Esophagus muscularis mucosa (tissue), 4 donors: ENCODE measurements at regions of chr6 and their contacts with region 1.

Region 1: GRCh38 chr6:125314019-125314581 is 12.3 kb upstream of the HDDC2 start:
- DNase-seq: peak; percentile 93
- H3K4me3 ChIP-seq: no peak overlapping the region
- H3K27ac ChIP-seq: no peak overlapping the region
- H3K4me1 ChIP-seq: peaks cover 0 to 6% (median 1%) of the 10 kb centered on the region in 4 donors
- H3K27me3 ChIP-seq: peaks cover 0 to 4% (median 0%) of the 10 kb centered on the region in 4 donors
- CTCF ChIP-seq: peak; percentile 79 to 90 (median 83)
- EP300 ChIP-seq: no peak
- POLR2A ChIP-seq: no peak

Region 2: DNA sequence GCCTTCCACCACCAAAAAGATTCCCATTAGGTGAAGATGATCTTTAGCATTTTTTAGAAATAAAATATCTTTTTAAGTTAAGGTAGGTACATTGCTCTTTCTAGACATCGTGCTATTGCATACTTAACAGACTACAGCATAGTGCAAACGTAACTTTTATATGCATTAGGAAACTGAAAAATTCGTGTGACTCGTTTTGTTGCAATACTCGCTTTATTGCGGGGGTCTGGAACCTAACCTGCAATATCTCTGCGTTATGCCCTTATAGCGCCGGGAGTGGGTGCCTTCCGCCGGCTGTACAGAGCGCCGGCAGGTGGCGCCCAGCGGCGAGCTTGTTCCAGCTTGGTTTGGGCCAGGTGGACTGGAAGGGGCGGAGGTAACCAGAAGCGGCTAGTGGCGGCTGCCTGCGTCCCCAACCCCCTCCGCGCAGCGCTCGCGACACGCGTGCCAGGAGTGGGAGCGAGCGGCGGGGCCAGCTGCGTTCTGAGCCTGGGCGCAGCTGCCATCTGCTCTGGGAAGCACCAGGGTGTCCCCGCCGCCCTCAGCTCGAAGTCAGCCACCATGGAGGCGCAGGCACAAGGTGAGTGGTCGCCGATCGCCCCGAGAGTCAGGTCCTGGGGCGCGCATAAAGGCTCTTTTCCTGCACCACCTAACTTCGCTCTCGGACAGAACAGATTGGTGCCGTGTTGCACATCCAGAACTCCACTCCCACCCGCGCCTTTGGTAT is 160.5 kb before region 1 on chr6 and contains the start of gene TPD52L1:
- intact Hi-C with region 1: loop called (anchors 5 kb)
- DNase-seq: no peak
- H3K4me3 ChIP-seq: peak within 1 kb of the TSS; percentile 60 to 80 (median 66)
- H3K27ac ChIP-seq: peak within 1 kb of the TSS; percentile 63 to 78 (median 71)
- H3K4me1 ChIP-seq: peaks cover 6 to 29% (median 25%) of the 10 kb centered on the region in 4 donors
- H3K27me3 ChIP-seq: no peaks in the 10 kb centered on the region
- CTCF ChIP-seq: peak; percentile 72 to 90 (median 89)
- EP300 ChIP-seq: no peak
- POLR2A ChIP-seq: no peak
- total RNA-seq, gene TPD52L1: 18.7 to 46.4 (median 31.1) TPM

Region 3: DNA sequence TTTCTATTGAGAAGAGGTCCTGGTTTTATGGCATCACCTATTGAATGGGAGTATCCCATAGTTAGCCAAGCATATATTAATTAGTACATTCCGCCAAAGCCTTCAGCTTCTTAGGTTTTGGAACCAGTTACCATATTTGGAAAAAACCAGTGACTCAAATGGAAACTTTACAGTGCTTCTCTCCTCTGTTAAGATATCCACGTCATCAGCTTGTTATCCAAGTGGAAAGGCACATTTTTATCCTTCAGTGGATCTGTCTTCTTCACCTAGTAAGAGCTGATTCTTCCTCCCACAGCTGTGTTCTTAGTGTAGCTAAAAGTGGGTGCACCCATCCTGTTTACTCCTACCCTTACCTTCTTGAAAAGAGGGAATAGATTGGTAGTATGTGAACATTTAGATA is 126.1 kb before region 1 on chr6:
- intact Hi-C with region 1: no loop called
- DNase-seq: no peak
- H3K4me3 ChIP-seq: no peak overlapping the region
- H3K27ac ChIP-seq: no peak overlapping the region
- H3K4me1 ChIP-seq: peaks cover 0 to 28% (median 7%) of the 10 kb centered on the region in 4 donors
- H3K27me3 ChIP-seq: no peaks in the 10 kb centered on the region
- CTCF ChIP-seq: no peak
- EP300 ChIP-seq: no peak
- POLR2A ChIP-seq: no peak

Region 4: GRCh38 chr6:125753218-125753936 is 439.3 kb after region 1 on chr6:
- intact Hi-C with region 1: loop called (anchors 5 kb)
- DNase-seq: no peak
- H3K4me3 ChIP-seq: no peak overlapping the region
- H3K27ac ChIP-seq: no peak overlapping the region
- H3K4me1 ChIP-seq: peaks cover 0 to 30% (median 21%) of the 10 kb centered on the region in 4 donors
- H3K27me3 ChIP-seq: peaks cover 0 to 67% (median 5%) of the 10 kb centered on the region in 4 donors
- CTCF ChIP-seq: peak; percentile 50 to 58 (median 52)
- EP300 ChIP-seq: no peak
- POLR2A ChIP-seq: no peak

Region 5: DNA sequence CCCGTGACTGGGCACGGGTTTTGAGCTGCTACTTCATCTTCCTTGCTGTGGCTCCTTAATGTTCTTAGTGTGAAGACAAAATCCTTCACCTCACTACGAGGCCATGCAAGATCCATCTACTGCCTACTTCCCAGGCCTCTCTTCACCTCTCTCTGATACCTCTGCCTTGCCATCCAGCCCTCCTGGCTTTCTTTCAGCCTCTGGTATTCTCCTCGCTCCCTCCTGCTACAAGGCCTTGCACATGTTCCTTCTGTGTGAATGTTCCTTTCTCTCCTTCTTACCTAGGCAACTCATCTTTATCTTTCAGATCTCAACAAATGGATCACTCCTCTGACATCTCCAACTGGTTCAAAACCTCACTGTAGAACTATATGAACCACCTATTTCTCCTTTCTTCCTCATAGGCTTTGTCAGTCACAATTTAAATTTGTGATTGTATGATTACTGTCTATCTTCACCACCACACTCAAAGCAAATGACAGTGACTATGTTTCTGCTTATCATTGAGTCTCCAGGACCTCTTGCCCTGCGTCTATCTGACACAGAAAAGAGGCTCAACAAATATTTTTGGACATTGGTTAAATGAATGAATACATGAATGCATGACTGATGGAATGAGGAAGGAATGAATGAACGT is 455.2 kb after region 1 on chr6:
- intact Hi-C with region 1: loop called (anchors 1 kb)
- DNase-seq: no peak
- H3K4me3 ChIP-seq: no peak overlapping the region
- H3K27ac ChIP-seq: no peak overlapping the region
- H3K4me1 ChIP-seq: no peaks in the 10 kb centered on the region
- H3K27me3 ChIP-seq: no peaks in the 10 kb centered on the region
- CTCF ChIP-seq: no peak
- EP300 ChIP-seq: no peak
- POLR2A ChIP-seq: no peak

Region 6: GRCh38 chr6:125974214-125974866 is 660.2 kb after region 1 on chr6:
- intact Hi-C with region 1: loop called (anchors 5 kb)
- DNase-seq: no peak
- H3K4me3 ChIP-seq: no peak overlapping the region
- H3K27ac ChIP-seq: no peak overlapping the region
- H3K4me1 ChIP-seq: peaks cover 0 to 5% (median 0%) of the 10 kb centered on the region in 4 donors
- H3K27me3 ChIP-seq: no peaks in the 10 kb centered on the region
- CTCF ChIP-seq: peak; percentile 52 to 55 (median 52)
- EP300 ChIP-seq: no peak
- POLR2A ChIP-seq: no peak